BJ (cell line): ENCODE measurements at regions of chr11 and their contacts with region 1.

Region 1: GRCh38 chr11:16936643-16937042 is 77.6 kb downstream of the PLEKHA7 start:
- DNase-seq: no peak
- H3K4me3 ChIP-seq: no peak overlapping the region
- H3K27me3 ChIP-seq: peaks cover 6% of the 10 kb centered on the region; the same call in 1 of the 2 replicates
- CTCF ChIP-seq: no peak

Region 2: DNA sequence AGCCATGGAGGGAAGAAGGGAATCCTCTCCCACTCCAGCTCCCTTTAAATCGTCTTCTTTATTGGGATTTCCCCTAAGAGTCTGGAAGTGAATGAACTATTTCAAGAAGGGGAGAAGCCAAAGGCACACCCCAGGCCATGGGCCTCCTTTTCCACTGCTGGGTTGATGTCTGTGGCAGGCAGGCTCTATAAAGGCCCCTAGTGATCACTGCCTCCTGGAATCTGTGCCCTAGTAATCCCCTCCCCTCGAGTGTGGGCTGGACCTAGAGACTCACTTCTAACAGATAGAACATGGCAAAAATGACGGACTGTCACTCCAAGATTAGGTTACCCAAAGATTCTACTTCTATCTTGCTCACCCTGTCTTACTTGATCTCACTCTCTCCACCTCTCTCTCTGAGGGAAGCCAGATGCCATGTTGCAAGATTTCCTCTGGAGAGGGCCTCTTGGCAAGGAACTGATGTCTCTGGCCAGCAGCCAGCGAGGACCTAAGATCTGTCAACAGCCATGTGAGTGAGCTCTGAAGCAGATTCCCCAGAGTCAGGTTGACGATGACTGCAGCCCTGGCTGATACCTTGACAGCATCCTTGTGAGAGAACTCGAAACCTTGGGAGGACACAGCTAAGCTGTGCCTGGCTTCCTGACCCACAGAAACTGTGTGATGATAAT is 1025.1 kb before region 1 on chr11:
- CTCF ChIA-PET with region 1: no interaction called
- POLR2A ChIA-PET with region 1: interaction called, 10 read pairs
- DNase-seq: no peak
- H3K4me3 ChIP-seq: no peak overlapping the region
- H3K27me3 ChIP-seq: peaks cover 4% of the 10 kb centered on the region
- CTCF ChIP-seq: no peak